Psoas muscle (tissue), 8 donors: ENCODE measurements at regions of chr20 and their contacts with region 1.

Region 1: DNA sequence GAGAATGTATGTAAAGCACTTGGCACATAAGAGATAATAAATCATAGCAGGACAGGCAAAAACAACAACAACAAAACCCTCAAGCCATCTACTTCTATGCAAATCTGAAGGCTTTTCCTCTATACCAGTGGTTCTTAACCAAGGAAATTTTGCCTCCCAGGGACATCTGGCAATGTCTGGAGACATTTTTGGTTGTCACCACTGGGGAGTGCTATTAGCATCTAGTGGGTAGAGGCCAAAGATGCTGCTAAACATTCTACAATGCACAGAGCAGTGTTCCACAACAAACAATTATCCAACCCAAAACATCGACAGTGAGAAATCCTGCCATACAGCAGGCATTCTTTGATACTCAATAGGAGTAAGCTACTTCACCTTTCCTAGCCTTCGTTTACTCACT is 28.2 kb downstream of the NDRG3 start:
- DNase-seq: no peak
- ATAC-seq: peak; percentile 57 to 94 (median 72)
- H3K4me3 ChIP-seq: no peak overlapping the region
- H3K27ac ChIP-seq: no peak overlapping the region
- H3K4me1 ChIP-seq: peaks cover 7% of the 10 kb centered on the region
- H3K27me3 ChIP-seq: no peaks in the 10 kb centered on the region
- CTCF ChIP-seq: peak; percentile 56

Region 2: DNA sequence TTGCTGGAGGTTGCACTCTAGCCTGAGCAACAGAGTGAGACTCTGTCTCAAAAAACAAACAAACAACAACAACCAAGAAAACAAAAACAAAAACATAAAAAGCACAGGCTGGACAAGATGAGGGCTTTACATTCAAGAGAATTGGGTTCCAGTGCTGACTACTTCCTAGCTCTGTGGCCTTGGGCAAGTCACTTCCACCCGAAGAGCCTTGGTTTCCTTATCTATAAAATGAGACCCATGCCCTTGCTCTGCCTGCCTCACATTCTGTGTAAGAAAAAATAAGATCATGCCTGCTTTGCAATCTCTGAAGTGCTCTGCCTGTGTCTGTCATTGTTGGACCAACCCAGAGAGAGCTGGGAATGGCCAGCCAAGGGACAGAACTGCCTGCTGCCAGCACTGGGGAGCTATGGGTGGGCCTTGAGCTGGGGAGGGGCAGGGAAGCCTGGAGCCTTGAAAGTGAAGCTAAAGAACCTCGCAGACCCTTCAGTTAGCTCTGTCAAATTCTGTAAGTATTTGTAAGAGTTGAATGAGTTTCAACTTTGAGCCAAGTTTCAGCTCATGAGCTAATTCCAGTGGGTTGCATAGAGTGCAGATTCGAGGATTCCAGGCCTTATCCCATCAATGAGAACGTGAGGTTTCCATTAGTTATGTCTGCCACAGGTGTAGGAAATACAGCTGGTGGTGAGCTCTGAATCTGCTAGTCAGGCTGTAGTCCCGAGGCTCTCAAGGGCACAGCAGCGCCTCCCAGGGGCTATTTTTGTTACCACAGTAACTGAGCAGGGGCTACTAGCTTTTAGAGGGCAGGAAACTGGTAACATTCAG is 318.3 kb before region 1 on chr20:
- intact Hi-C with region 1: no loop called
- DNase-seq: no peak
- ATAC-seq: no peak
- H3K4me3 ChIP-seq: no peak overlapping the region
- H3K27ac ChIP-seq: no peak overlapping the region
- H3K4me1 ChIP-seq: no peaks in the 10 kb centered on the region
- H3K27me3 ChIP-seq: peaks cover 0 to 52% (median 1%) of the 10 kb centered on the region in 3 donors
- CTCF ChIP-seq: peak; percentile 18

Region 3: DNA sequence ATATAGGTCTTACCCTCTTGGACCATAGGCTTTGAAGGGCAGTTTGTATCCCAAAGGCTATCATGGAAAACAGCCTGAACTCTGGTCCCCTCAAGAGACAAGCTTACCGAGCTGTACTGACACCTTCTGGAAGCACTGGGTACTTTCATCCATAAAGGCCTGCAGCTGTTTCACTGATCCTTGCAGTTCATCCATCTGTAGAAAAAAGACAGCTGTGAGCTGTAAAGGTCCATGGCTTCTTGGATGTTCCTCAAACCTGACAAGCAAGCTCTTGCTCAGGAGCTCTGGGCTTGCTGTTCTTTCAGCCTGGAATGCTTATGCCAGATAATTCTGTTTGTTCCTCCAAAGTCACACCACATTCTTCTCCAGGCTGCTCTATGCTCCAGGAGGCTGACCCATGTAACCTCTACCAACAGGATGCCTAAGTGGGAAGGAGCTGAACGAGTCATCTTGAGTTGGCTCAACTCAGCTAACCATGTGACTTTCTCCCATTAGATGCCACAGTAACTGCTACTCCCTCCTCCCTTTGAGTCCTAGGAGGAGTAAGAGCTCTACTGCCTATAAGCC is 37.1 kb after region 1 on chr20:
- intact Hi-C with region 1: loop called (anchors 2 kb)
- DNase-seq: no peak
- ATAC-seq: peak; percentile 96 to 99 (median 97)
- H3K4me3 ChIP-seq: no peak overlapping the region
- H3K27ac ChIP-seq: no peak overlapping the region
- H3K4me1 ChIP-seq: no peaks in the 10 kb centered on the region
- H3K27me3 ChIP-seq: no peaks in the 10 kb centered on the region
- CTCF ChIP-seq: peak; percentile 83

Region 4: GRCh38 chr20:36886859-36887751 is 169.4 kb after region 1 on chr20:
- intact Hi-C with region 1: loop called in 1 of 2 experiments (anchors 2 kb)
- DNase-seq: peak; percentile 83 to 90
- ATAC-seq: peak; percentile 89 to 97 (median 94)
- H3K4me3 ChIP-seq: no peak overlapping the region
- H3K27ac ChIP-seq: no peak overlapping the region
- H3K4me1 ChIP-seq: no peaks in the 10 kb centered on the region
- H3K27me3 ChIP-seq: no peaks in the 10 kb centered on the region
- CTCF ChIP-seq: peak; percentile 92